GM12878 (cell line): ENCODE measurements at regions of chr3 and their contacts with region 1.

Region 1: GRCh38 chr3:116339441-116340028 is 105.8 kb downstream of the LSAMP start:
- DNase-seq: no peak
- ATAC-seq: peak; percentile 10; the same call in 2 of the 3 replicates
- H3K4me3 ChIP-seq: no peak overlapping the region
- H3K27ac ChIP-seq: no peak overlapping the region
- H3K4me1 ChIP-seq: no peaks in the 10 kb centered on the region
- H3K27me3 ChIP-seq: no peaks in the 10 kb centered on the region
- CTCF ChIP-seq: no peak
- EP300 ChIP-seq: no peak
- POLR2A ChIP-seq: no peak
- RAD21 ChIP-seq: no peak

Region 2: GRCh38 chr3:116263842-116264545 is 75.5 kb before region 1 on chr3:
- CTCF ChIA-PET with region 1: interaction called, 3 read pairs
- POLR2A ChIA-PET with region 1: interaction called, 4 read pairs
- RAD21 ChIA-PET with region 1: interaction called, 4 read pairs
- SMC1A ChIA-PET with region 1: interaction called, 5 read pairs
- in situ Hi-C with region 1: no loop called
- intact Hi-C with region 1: loop called (anchors 5 kb)
- DNase-seq: no peak
- ATAC-seq: no peak
- H3K4me3 ChIP-seq: no peak overlapping the region
- H3K27ac ChIP-seq: no peak overlapping the region
- H3K4me1 ChIP-seq: no peaks in the 10 kb centered on the region
- H3K27me3 ChIP-seq: no peaks in the 10 kb centered on the region
- CTCF ChIP-seq: no peak
- EP300 ChIP-seq: no peak
- POLR2A ChIP-seq: no peak
- RAD21 ChIP-seq: no peak

Region 3: GRCh38 chr3:116299646-116300081 is 39.9 kb before region 1 on chr3:
- CTCF ChIA-PET with region 1: interaction called, 5 read pairs
- POLR2A ChIA-PET with region 1: interaction called, 3 read pairs
- RAD21 ChIA-PET with region 1: interaction called, 15 read pairs
- SMC1A ChIA-PET with region 1: interaction called, 4 read pairs
- in situ Hi-C with region 1: no loop called
- intact Hi-C with region 1: no loop called
- DNase-seq: peak; percentile 31
- ATAC-seq: peak; percentile 88
- H3K4me3 ChIP-seq: no peak overlapping the region
- H3K27ac ChIP-seq: no peak overlapping the region
- H3K4me1 ChIP-seq: no peaks in the 10 kb centered on the region
- H3K27me3 ChIP-seq: no peaks in the 10 kb centered on the region
- CTCF ChIP-seq: no peak
- EP300 ChIP-seq: no peak
- POLR2A ChIP-seq: no peak
- RAD21 ChIP-seq: no peak

Region 4: GRCh38 chr3:116322750-116323375 is 16.7 kb before region 1 on chr3:
- CTCF ChIA-PET with region 1: interaction called, 14 read pairs
- POLR2A ChIA-PET with region 1: no interaction called
- RAD21 ChIA-PET with region 1: interaction called, 4 read pairs
- SMC1A ChIA-PET with region 1: interaction called, 17 read pairs
- in situ Hi-C with region 1: no loop called
- intact Hi-C with region 1: no loop called
- DNase-seq: no peak
- ATAC-seq: no peak
- H3K4me3 ChIP-seq: no peak overlapping the region
- H3K27ac ChIP-seq: no peak overlapping the region
- H3K4me1 ChIP-seq: no peaks in the 10 kb centered on the region
- H3K27me3 ChIP-seq: no peaks in the 10 kb centered on the region
- CTCF ChIP-seq: no peak
- EP300 ChIP-seq: no peak
- POLR2A ChIP-seq: no peak
- RAD21 ChIP-seq: no peak